Heart right ventricle (tissue), 16 donors: ENCODE measurements at regions of chr4 and their contacts with region 1.

Region 1: GRCh38 chr4:147768113-147768512 is 36.2 kb downstream of the ARHGAP10 start:
- DNase-seq: no peak
- ATAC-seq: peak in 2 of 8 donors; percentile 34 to 80
- H3K4me3 ChIP-seq: no peak overlapping the region
- H3K27ac ChIP-seq: no peak overlapping the region
- H3K4me1 ChIP-seq: peaks cover 12 to 60% (median 44%) of the 10 kb centered on the region in 9 donors
- H3K27me3 ChIP-seq: no peaks in the 10 kb centered on the region
- CTCF ChIP-seq: no peak

Region 2: DNA sequence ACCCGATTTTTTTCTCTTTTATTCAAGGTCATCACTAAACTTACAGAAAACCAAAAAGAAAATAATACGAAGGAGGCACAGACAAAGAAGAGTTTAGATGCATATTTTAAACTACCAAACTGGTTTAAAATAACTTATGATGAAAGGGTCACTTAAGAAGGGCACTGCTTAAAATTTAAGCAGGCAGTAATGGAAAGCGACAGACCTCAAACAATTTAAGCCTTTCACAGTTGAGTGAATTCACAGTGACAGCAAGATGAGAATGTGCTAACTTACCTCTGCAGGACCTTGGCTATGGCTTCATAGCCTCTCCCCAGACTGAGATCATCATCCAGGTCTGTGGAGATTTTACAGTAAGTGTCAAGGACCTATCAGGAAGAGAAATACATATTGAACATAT is 934.6 kb before region 1 on chr4:
- intact Hi-C with region 1: no loop called
- DNase-seq: no peak
- ATAC-seq: no peak
- H3K4me3 ChIP-seq: no peak overlapping the region
- H3K27ac ChIP-seq: no peak overlapping the region
- H3K4me1 ChIP-seq: no peaks in the 10 kb centered on the region
- H3K27me3 ChIP-seq: no peaks in the 10 kb centered on the region
- CTCF ChIP-seq: no peak

Region 3: GRCh38 chr4:147786031-147786430 is 17.9 kb after region 1 on chr4:
- intact Hi-C with region 1: loop called in 1 of 10 experiments (anchors 2 kb)
- DNase-seq: no peak
- ATAC-seq: no peak
- H3K4me3 ChIP-seq: no peak overlapping the region
- H3K27ac ChIP-seq: peak overlapping the region in 9 of 10 donors; percentile 1 to 77 (median 59)
- H3K4me1 ChIP-seq: peaks cover 0 to 68% (median 62%) of the 10 kb centered on the region in 9 donors
- H3K27me3 ChIP-seq: no peaks in the 10 kb centered on the region
- CTCF ChIP-seq: no peak

Region 4: GRCh38 chr4:147831551-147832177 is 63.6 kb after region 1 on chr4:
- intact Hi-C with region 1: loop called in 2 of 10 experiments (anchors 5 to 10 kb)
- DNase-seq: peak in 1 of 2 donors; percentile 29
- ATAC-seq: peak; percentile 20 to 81 (median 53)
- H3K4me3 ChIP-seq: no peak overlapping the region
- H3K27ac ChIP-seq: peak overlapping the region; percentile 73 to 93 (median 89)
- H3K4me1 ChIP-seq: peaks cover 15 to 79% (median 58%) of the 10 kb centered on the region in 9 donors
- H3K27me3 ChIP-seq: no peaks in the 10 kb centered on the region
- CTCF ChIP-seq: no peak